ENCODE measurements at regions of chr9 and their contacts with region 1.

Region 1: DNA sequence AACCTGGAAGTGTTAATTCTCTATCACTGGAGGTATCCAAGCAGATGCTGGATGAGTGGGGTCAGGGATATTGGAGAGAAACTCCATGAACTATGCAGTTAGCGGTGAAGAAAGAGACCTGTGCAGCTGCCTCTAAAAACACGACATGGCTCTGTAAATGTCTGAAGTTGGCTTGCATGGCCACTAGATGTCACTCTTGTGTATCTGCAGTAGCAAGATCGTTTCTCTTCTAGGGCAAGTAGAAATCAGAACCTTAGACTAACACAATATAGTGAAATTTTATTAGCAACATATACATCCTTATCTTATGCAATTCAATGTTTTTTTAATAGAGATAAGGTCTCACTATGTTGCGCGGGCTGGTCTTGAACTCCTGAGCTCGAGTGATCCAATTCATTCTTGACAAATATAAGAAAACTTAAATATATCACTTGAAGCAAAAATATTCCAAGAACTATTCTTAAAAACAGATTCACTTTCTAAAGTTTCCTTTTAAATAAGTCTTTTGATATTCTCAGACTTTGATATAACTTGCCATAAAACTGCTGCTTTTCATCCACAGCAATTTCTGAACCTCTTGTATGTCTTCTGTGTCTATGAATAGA is 2.9 kb downstream of the OR2S2 start:
- DNase-seq: no peak
- H3K4me3 ChIP-seq: no peak overlapping the region
- H3K27ac ChIP-seq: no peak overlapping the region
- H3K4me1 ChIP-seq: no peaks in the 10 kb centered on the region
- H3K27me3 ChIP-seq: peaks cover 0 to 40% (median 0%) of the 10 kb centered on the region in 4 donors
- CTCF ChIP-seq: peak; percentile 59 to 83 (median 74)
- POLR2A ChIP-seq: no peak

Region 2: GRCh38 chr9:35835216-35835632 is 119.8 kb before region 1 on chr9:
- intact Hi-C with region 1: no loop called
- DNase-seq: no peak
- H3K4me3 ChIP-seq: no peak overlapping the region
- H3K27ac ChIP-seq: no peak overlapping the region
- H3K4me1 ChIP-seq: peaks cover 8 to 44% (median 11%) of the 10 kb centered on the region in 3 donors
- H3K27me3 ChIP-seq: peaks cover 0 to 24% (median 0%) of the 10 kb centered on the region in 4 donors
- CTCF ChIP-seq: peak in 3 of 6 experiments; percentile 6 to 40 (median 9)
- POLR2A ChIP-seq: no peak

Region 3: GRCh38 chr9:36023260-36024048 is 68.4 kb after region 1 on chr9:
- intact Hi-C with region 1: loop called (anchors 5 kb)
- DNase-seq: no peak
- H3K4me3 ChIP-seq: no peak overlapping the region
- H3K27ac ChIP-seq: no peak overlapping the region
- H3K4me1 ChIP-seq: peaks cover 0 to 10% (median 7%) of the 10 kb centered on the region in 3 donors
- H3K27me3 ChIP-seq: no peaks in the 10 kb centered on the region
- CTCF ChIP-seq: peak; percentile 40 to 83 (median 78)
- POLR2A ChIP-seq: no peak

Measured in esophagus squamous epithelium (tissue), 5 donors.